ENCODE measurements at regions of chr14 and their contacts with region 1.

Region 1: GRCh38 chr14:71403656-71404055 is 496.4 kb downstream of the PCNX1 start:
- DNase-seq: peak; percentile 84
- ATAC-seq: peak; percentile 43
- H3K4me3 ChIP-seq: no peak overlapping the region
- H3K4me3 Mint-ChIP-seq: peak overlapping the region; percentile 47
- H3K27ac ChIP-seq: peak overlapping the region; percentile 15 to 64
- H3K27ac Mint-ChIP-seq: peak overlapping the region; percentile 83
- H3K4me1 ChIP-seq: peaks cover 43 to 55% of the 10 kb centered on the region in 2 donors
- H3K4me1 Mint-ChIP-seq: peaks cover 53% of the 10 kb centered on the region
- H3K27me3 ChIP-seq: no peaks in the 10 kb centered on the region
- H3K27me3 Mint-ChIP-seq: no peaks in the 10 kb centered on the region
- CTCF ChIP-seq: peak; percentile 70

Region 2: DNA sequence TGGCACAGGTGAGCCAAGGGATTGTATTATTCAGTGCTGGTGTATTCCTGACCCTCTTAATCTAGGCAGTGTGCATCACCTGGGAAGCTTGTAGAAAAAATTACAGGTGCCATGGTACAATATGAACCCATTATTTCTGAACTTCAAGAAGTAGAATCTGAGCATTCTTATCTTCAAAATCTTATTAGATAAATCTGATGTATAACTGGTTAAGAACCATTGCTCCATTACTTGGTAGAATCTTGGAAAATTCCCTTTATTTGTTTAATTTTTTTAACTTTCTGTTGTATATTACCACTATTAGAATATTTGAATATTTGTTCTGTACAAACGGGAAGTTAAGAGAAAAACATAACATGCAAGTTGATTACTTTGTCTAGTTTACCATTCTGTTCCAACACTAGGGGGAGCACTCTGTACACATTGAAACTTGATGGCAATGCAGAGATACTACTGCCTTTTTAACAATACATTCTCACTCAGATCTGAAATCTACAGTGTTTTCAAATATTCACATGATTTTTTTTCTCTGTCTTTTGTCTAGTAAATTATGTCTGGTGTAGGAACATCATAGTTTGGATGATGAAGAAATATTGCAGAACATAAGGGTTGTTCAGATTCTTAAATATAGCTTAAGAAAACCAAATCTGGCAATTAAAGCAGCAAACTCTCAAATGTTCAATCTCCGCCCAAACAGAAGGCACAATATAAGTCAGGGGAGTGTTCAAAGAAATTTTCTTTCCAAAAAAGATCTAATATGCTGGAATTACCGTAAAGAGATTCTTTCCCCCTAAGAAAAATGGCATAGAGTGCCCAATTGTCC is 299.8 kb before region 1 on chr14:
- CTCF ChIA-PET with region 1: interaction called, 12 read pairs
- POLR2A ChIA-PET with region 1: no interaction called
- intact Hi-C with region 1: no loop called
- DNase-seq: peak; percentile 70
- ATAC-seq: peak; percentile 49
- H3K4me3 ChIP-seq: no peak overlapping the region
- H3K4me3 Mint-ChIP-seq: no peak overlapping the region
- H3K27ac ChIP-seq: no peak overlapping the region
- H3K27ac Mint-ChIP-seq: no peak overlapping the region
- H3K4me1 ChIP-seq: no peaks in the 10 kb centered on the region
- H3K4me1 Mint-ChIP-seq: peaks cover 2% of the 10 kb centered on the region
- H3K27me3 ChIP-seq: no peaks in the 10 kb centered on the region
- H3K27me3 Mint-ChIP-seq: no peaks in the 10 kb centered on the region
- CTCF ChIP-seq: peak; percentile 91

Region 3: GRCh38 chr14:71341163-71341562 is 62.5 kb before region 1 on chr14:
- CTCF ChIA-PET with region 1: interaction called, 11 read pairs
- POLR2A ChIA-PET with region 1: no interaction called
- intact Hi-C with region 1: no loop called
- DNase-seq: no peak
- ATAC-seq: no peak
- H3K4me3 ChIP-seq: no peak overlapping the region
- H3K4me3 Mint-ChIP-seq: no peak overlapping the region
- H3K27ac ChIP-seq: no peak overlapping the region
- H3K27ac Mint-ChIP-seq: no peak overlapping the region
- H3K4me1 ChIP-seq: peaks cover 9 to 10% of the 10 kb centered on the region in 2 donors
- H3K4me1 Mint-ChIP-seq: peaks cover 74% of the 10 kb centered on the region
- H3K27me3 ChIP-seq: no peaks in the 10 kb centered on the region
- H3K27me3 Mint-ChIP-seq: no peaks in the 10 kb centered on the region
- CTCF ChIP-seq: no peak

Region 4: GRCh38 chr14:71362920-71363584 is 40.6 kb before region 1 on chr14:
- CTCF ChIA-PET with region 1: interaction called, 16 read pairs
- POLR2A ChIA-PET with region 1: interaction called, 8 read pairs
- intact Hi-C with region 1: loop called (anchors 1 kb)
- DNase-seq: peak; percentile 80
- ATAC-seq: peak; percentile 47
- H3K4me3 ChIP-seq: no peak overlapping the region
- H3K4me3 Mint-ChIP-seq: peak overlapping the region; percentile 81
- H3K27ac ChIP-seq: peak overlapping the region; percentile 89 to 95
- H3K27ac Mint-ChIP-seq: peak overlapping the region; percentile 94
- H3K4me1 ChIP-seq: peaks cover 80 to 86% of the 10 kb centered on the region in 2 donors
- H3K4me1 Mint-ChIP-seq: peaks cover 82% of the 10 kb centered on the region
- H3K27me3 ChIP-seq: no peaks in the 10 kb centered on the region
- H3K27me3 Mint-ChIP-seq: no peaks in the 10 kb centered on the region
- CTCF ChIP-seq: no peak

Region 5: DNA sequence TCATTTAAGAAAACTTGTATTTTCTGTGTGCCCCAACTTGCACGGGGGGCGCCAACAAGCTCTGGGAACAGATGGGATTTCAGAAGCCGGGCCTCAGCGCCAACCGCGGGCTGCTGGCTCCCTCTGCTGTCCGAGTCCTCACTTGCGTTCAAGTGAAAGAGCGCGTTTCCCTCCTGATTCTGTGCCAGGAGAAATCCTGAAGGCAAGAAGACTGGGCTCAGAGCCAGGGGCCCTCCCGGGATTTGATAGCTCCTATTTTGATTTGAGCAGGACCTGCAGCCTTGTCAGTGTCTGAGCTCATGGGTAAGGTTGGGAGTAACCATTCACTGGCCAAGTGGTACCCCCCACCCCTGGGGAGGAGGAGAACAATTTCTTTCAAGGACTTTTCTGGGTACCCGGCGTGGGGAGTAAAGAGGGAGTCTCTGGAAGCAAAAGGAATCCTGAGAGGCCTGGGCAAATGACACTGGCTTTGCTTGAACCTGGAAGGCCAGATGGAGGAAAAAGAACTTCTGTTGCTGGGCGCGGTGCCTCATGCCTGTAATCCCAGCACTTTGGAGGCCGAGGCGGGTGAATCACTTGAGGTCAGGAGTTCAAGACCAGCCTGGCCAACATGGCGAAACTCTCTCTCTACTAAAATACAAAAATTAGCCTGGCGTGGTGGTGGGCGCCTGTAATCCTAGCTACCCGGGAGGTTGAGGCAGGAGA is 349.6 kb after region 1 on chr14:
- CTCF ChIA-PET with region 1: interaction called, 13 read pairs
- POLR2A ChIA-PET with region 1: no interaction called
- intact Hi-C with region 1: no loop called
- DNase-seq: peak; percentile 78
- ATAC-seq: peak; percentile 78
- H3K4me3 ChIP-seq: no peak overlapping the region
- H3K4me3 Mint-ChIP-seq: no peak overlapping the region
- H3K27ac ChIP-seq: no peak overlapping the region
- H3K27ac Mint-ChIP-seq: no peak overlapping the region
- H3K4me1 ChIP-seq: peaks cover 3 to 4% of the 10 kb centered on the region in 2 donors
- H3K4me1 Mint-ChIP-seq: no peaks in the 10 kb centered on the region
- H3K27me3 ChIP-seq: peaks cover 0 to 5% (median 0%) of the 10 kb centered on the region in 4 experiments
- H3K27me3 Mint-ChIP-seq: peaks cover 6% of the 10 kb centered on the region
- CTCF ChIP-seq: peak; percentile 93

Measured in B cell (primary cell).